ENCODE measurements at regions of chr1 and their contacts with region 1.

Region 1: GRCh38 chr1:79006564-79006963 is at the start of gene ADGRL4:
- DNase-seq: peak; percentile 90
- H3K4me3 ChIP-seq: peak within 1 kb of the TSS; percentile 93 to 99 (median 97)
- H3K27ac ChIP-seq: peak within 1 kb of the TSS; percentile 97
- H3K4me1 ChIP-seq: peaks cover 47% of the 10 kb centered on the region
- H3K27me3 ChIP-seq: no peaks in the 10 kb centered on the region
- CTCF ChIP-seq: no peak
- POLR2A ChIP-seq: peak; percentile 90
- total RNA-seq, gene ADGRL4: 143 and 205 TPM in 2 replicates

Region 2: DNA sequence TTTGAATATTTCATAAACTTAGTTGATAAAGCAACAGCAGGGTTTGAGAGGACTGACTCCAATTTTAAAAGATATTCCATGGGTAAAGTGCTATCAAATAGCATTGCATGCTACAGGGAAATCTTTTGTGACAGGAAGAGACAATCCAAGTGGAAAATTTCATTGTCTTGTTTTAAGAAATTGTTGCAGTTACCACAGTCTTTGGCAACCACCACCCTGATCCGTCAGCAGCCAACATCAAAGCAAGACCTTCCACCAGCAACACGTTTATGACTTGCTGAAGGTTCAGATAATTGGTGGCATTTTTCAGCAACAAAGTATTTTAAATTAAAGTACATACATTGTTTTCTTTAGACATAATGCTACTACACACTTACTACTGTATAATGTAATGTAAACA is 47.9 kb before region 1 on chr1:
- CTCF ChIA-PET with region 1: no interaction called
- POLR2A ChIA-PET with region 1: no interaction called
- dilution Hi-C with region 1: no loop called
- intact Hi-C with region 1: no loop called
- DNase-seq: no peak
- H3K4me3 ChIP-seq: no peak overlapping the region
- H3K27ac ChIP-seq: no peak overlapping the region
- H3K4me1 ChIP-seq: no peaks in the 10 kb centered on the region
- H3K27me3 ChIP-seq: no peaks in the 10 kb centered on the region
- CTCF ChIP-seq: no peak
- POLR2A ChIP-seq: no peak

Region 3: GRCh38 chr1:79042117-79042516 is 35.6 kb after region 1 on chr1:
- CTCF ChIA-PET with region 1: interaction called, 5 read pairs
- POLR2A ChIA-PET with region 1: interaction called, 3 read pairs
- dilution Hi-C with region 1: no loop called
- intact Hi-C with region 1: loop called (anchors 1 kb)
- DNase-seq: peak; percentile 58
- H3K4me3 ChIP-seq: no peak overlapping the region
- H3K27ac ChIP-seq: peak overlapping the region; percentile 59
- H3K4me1 ChIP-seq: peaks cover 30% of the 10 kb centered on the region
- H3K27me3 ChIP-seq: no peaks in the 10 kb centered on the region
- CTCF ChIP-seq: no peak
- POLR2A ChIP-seq: no peak

Region 4: DNA sequence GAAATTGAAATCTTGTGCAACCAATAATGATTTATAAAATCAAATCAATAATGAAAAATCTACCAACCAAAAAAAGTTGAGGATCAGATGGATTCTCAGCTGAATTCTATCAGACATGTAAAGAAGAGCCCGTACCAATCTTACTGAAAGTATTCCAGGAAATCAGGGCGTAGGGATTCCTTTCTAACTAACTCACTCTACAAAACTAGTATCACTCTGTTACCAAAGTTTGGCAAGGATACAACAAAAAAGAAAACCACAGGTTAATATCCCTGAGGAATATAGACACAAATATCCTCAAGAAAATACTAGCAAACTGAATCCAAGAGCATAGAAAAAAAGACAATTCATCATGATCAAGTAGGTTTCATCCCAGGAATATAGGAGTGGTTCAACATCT is 52.8 kb after region 1 on chr1:
- CTCF ChIA-PET with region 1: no interaction called
- POLR2A ChIA-PET with region 1: no interaction called
- dilution Hi-C with region 1: no loop called
- intact Hi-C with region 1: no loop called
- DNase-seq: no peak
- H3K4me3 ChIP-seq: no peak overlapping the region
- H3K27ac ChIP-seq: no peak overlapping the region
- H3K4me1 ChIP-seq: no peaks in the 10 kb centered on the region
- H3K27me3 ChIP-seq: no peaks in the 10 kb centered on the region
- CTCF ChIP-seq: no peak
- POLR2A ChIP-seq: no peak

Region 5: DNA sequence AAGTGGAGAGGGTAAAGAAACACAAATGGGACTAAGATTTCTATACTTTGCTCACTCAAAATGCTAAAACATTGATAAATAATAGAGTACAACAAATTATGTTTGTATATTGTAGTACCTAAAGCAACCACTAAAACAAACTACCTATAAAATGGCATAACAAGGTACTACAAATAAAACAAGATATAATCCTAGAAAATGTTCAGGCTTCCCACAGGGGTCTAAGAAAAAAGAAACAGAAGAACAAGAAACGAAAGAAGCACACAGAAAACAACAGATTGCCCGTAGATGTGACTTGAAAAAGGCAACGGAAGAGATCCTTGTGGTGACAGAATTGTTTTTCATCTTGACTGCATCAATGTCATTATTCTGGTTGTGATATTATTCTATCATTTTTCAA is 63.3 kb after region 1 on chr1:
- CTCF ChIA-PET with region 1: no interaction called
- POLR2A ChIA-PET with region 1: no interaction called
- dilution Hi-C with region 1: no loop called
- intact Hi-C with region 1: no loop called
- DNase-seq: no peak
- H3K4me3 ChIP-seq: no peak overlapping the region
- H3K27ac ChIP-seq: no peak overlapping the region
- H3K4me1 ChIP-seq: no peaks in the 10 kb centered on the region
- H3K27me3 ChIP-seq: no peaks in the 10 kb centered on the region
- CTCF ChIP-seq: no peak
- POLR2A ChIP-seq: no peak

Region 6: DNA sequence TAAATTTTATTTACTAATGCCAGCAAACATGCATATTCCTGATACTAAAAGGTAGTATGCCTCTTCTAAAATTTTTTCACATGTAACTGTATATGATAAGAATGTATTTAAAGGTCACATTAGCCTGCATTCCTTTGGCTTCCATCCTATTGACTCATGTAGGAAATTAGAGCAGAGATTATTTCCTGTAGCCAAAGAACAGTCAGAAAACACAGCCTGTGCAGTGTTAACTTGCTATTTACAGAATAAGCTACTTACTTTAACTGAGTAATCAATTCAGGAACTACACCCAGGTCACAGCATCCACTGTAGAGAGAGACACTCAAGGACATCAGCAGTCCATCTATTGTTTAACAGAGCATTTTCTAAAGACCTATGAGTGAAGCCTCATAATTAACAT is 154.5 kb after region 1 on chr1:
- CTCF ChIA-PET with region 1: no interaction called
- POLR2A ChIA-PET with region 1: no interaction called
- dilution Hi-C with region 1: no loop called
- intact Hi-C with region 1: loop called (anchors 1 kb)
- DNase-seq: peak; percentile 89
- H3K4me3 ChIP-seq: no peak overlapping the region
- H3K27ac ChIP-seq: peak overlapping the region; percentile 77
- H3K4me1 ChIP-seq: peaks cover 16% of the 10 kb centered on the region
- H3K27me3 ChIP-seq: no peaks in the 10 kb centered on the region
- CTCF ChIP-seq: no peak
- POLR2A ChIP-seq: no peak

Region 7: DNA sequence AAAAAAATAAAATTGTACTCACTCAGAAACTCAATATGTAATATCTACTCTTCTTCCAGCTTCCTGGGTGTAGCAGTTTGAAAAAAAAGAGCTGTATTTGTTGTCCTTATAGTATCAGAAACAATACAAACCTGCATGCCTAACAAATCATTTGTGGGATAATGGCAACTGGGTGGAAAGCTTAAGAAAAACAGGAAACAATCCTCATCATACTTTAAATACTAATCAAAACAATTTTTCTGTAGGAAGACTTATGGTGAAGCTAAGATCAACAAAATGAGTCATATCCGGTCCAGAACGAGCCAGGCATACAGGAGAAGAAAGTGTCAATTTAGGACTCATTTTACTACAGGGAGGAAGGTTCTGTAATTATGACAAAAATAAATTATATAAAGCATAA is 181.8 kb after region 1 on chr1:
- CTCF ChIA-PET with region 1: interaction called, 3 read pairs
- POLR2A ChIA-PET with region 1: interaction called, 3 read pairs
- dilution Hi-C with region 1: no loop called
- intact Hi-C with region 1: loop called (anchors 1 kb)
- DNase-seq: peak; percentile 90
- H3K4me3 ChIP-seq: peak overlapping the region in 2 of 3 experiments; percentile 15 to 26
- H3K27ac ChIP-seq: peak overlapping the region; percentile 51
- H3K4me1 ChIP-seq: peaks cover 39% of the 10 kb centered on the region
- H3K27me3 ChIP-seq: no peaks in the 10 kb centered on the region
- CTCF ChIP-seq: no peak
- POLR2A ChIP-seq: no peak

Region 8: DNA sequence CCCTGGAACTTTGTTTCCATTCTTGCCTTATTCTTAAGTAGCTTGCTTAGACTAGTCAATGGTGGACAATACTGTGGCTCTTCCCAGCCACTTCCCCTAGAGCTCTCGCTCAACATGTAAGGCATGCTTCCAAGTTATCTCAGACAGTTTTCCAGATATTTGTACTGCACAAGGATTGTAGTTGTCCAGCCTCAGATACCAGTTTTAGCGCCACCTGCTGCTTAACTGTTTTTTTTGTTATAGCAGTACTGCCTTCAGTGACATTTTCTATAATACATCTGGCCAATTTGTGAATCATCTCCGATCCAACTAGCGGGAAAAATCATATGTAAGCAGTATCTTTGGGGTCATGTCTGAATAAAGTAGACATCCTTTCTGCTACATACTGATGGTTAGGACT is 346.7 kb after region 1 on chr1:
- CTCF ChIA-PET with region 1: no interaction called
- POLR2A ChIA-PET with region 1: no interaction called
- dilution Hi-C with region 1: no loop called
- intact Hi-C with region 1: loop called (anchors 5 kb)
- DNase-seq: peak; percentile 67
- H3K4me3 ChIP-seq: no peak overlapping the region
- H3K27ac ChIP-seq: no peak overlapping the region
- H3K4me1 ChIP-seq: no peaks in the 10 kb centered on the region
- H3K27me3 ChIP-seq: no peaks in the 10 kb centered on the region
- CTCF ChIP-seq: peak; percentile 42 to 47
- POLR2A ChIP-seq: no peak

Measured in endothelial cell of umbilical vein (primary cell).